IMR-90 (cell line): ENCODE measurements at regions of chr2 and their contacts with region 1.

Region 1: GRCh38 chr2:66839551-66840320 is 404.8 kb downstream of the MEIS1 start:
- DNase-seq: peak; percentile 100
- ATAC-seq: peak; percentile 93
- H3K4me3 ChIP-seq: 0 out of 2 replicates have a peak overlapping the region, but pooled peaks have one; percentile 37
- H3K27ac ChIP-seq: peak overlapping the region; percentile 89
- H3K4me1 ChIP-seq: peaks cover 11% of the 10 kb centered on the region
- H3K27me3 ChIP-seq: no peaks in the 10 kb centered on the region
- CTCF ChIP-seq: 0 out of 2 replicates have a peak, but pooled peaks have one; percentile 1
- POLR2A ChIP-seq: peak; percentile 73
- RAD21 ChIP-seq: no peak; the same call in 1 of the 2 replicates

Region 2: GRCh38 chr2:66587216-66587615 is 252.5 kb before region 1 on chr2:
- CTCF ChIA-PET with region 1: no interaction called
- POLR2A ChIA-PET with region 1: no interaction called
- dilution Hi-C with region 1: no loop called
- in situ Hi-C with region 1: loop called (anchors 10 kb)
- intact Hi-C with region 1: no loop called
- DNase-seq: peak; percentile 56
- ATAC-seq: peak; percentile 30; the same call in 1 of the 2 replicates
- H3K4me3 ChIP-seq: no peak overlapping the region
- H3K27ac ChIP-seq: no peak overlapping the region
- H3K4me1 ChIP-seq: peaks cover 13% of the 10 kb centered on the region
- H3K27me3 ChIP-seq: no peaks in the 10 kb centered on the region
- CTCF ChIP-seq: peak; percentile 28
- POLR2A ChIP-seq: no peak
- RAD21 ChIP-seq: peak; percentile 36; the same call in 1 of the 2 replicates

Region 3: GRCh38 chr2:66888791-66889631 is 49.3 kb after region 1 on chr2:
- CTCF ChIA-PET with region 1: no interaction called
- POLR2A ChIA-PET with region 1: no interaction called
- dilution Hi-C with region 1: no loop called
- in situ Hi-C with region 1: no loop called
- intact Hi-C with region 1: loop called (anchors 1 kb)
- DNase-seq: peak; percentile 100
- ATAC-seq: peak; percentile 68
- H3K4me3 ChIP-seq: no peak overlapping the region
- H3K27ac ChIP-seq: peak overlapping the region; percentile 100
- H3K4me1 ChIP-seq: peaks cover 9% of the 10 kb centered on the region
- H3K27me3 ChIP-seq: no peaks in the 10 kb centered on the region
- CTCF ChIP-seq: no peak
- POLR2A ChIP-seq: no peak; the same call in none of the 2 replicates
- RAD21 ChIP-seq: peak; percentile 2

Region 4: DNA sequence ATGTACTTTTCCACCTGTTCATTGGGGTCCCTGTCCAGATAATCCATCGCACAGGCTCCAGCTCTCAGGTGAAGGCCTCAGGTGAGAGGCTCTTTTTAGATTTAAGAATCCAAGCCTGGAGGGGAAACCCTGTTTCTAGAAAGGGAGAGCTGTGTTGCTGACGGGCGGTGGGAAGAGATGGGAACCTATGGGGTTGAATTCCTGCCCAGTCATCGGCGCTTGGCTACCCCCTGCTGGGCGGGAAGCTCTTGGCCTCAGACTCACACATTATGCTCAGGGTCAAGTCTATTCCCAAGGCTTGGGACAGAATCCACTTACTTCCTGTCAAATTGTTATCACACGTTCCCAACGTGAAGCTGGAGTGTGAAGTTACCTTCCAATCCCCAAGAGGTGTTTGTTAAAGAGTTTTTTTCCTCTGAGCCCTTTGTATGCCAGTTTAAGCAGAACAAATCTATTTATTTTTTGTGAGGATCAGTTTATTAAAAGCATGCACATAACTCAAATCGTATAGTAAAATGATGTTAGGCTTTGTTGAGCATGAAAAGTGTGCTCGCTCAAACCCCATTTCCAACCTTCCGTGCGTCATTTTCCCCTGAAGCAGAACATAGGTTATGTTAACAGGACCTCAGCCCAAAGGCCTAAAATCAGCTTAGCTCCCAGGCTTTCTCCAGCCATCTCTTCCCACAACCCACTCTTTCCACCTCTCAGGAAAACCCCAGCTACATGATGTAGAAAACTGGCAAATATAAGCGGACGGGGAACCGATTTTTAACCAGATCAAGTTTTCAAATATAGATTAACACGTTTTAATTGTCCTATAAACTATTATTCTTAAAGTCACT is 375.7 kb after region 1 on chr2:
- CTCF ChIA-PET with region 1: interaction called, 3 read pairs
- POLR2A ChIA-PET with region 1: no interaction called
- dilution Hi-C with region 1: no loop called
- in situ Hi-C with region 1: no loop called
- intact Hi-C with region 1: loop called (anchors 1 kb)
- DNase-seq: peak; percentile 92
- ATAC-seq: peak; percentile 95
- H3K4me3 ChIP-seq: no peak overlapping the region
- H3K27ac ChIP-seq: peak overlapping the region; percentile 86
- H3K4me1 ChIP-seq: peaks cover 16% of the 10 kb centered on the region
- H3K27me3 ChIP-seq: no peaks in the 10 kb centered on the region
- CTCF ChIP-seq: peak; percentile 88
- POLR2A ChIP-seq: no peak
- RAD21 ChIP-seq: peak; percentile 95